PC-9 (cell line): ENCODE measurements at regions of chr11 and their contacts with region 1.

Region 1: GRCh38 chr11:64916775-64917662 is at the start of gene ATG2A:
- DNase-seq: peak; percentile 99
- H3K4me3 ChIP-seq: peak within 1 kb of the TSS; percentile 67
- H3K27ac ChIP-seq: peak within 1 kb of the TSS; percentile 50
- H3K4me1 ChIP-seq: peaks cover 16% of the 10 kb centered on the region
- H3K27me3 ChIP-seq: no peaks in the 10 kb centered on the region
- CTCF ChIP-seq: no peak
- total RNA-seq, gene ATG2A: 48.2 and 53.2 TPM in 2 replicates

Region 2: GRCh38 chr11:64878494-64879243 is 38.4 kb before region 1 on chr11 and contains the start of gene EHD1:
- CTCF ChIA-PET with region 1: no interaction called
- POLR2A ChIA-PET with region 1: no interaction called
- intact Hi-C with region 1: loop called (anchors 2 kb)
- DNase-seq: peak; percentile 92 to 99
- H3K4me3 ChIP-seq: peak within 1 kb of the TSS; percentile 98
- H3K27ac ChIP-seq: peak within 1 kb of the TSS; percentile 80
- H3K4me1 ChIP-seq: peaks cover 28% of the 10 kb centered on the region
- H3K27me3 ChIP-seq: no peaks in the 10 kb centered on the region
- CTCF ChIP-seq: peak; percentile 39
- total RNA-seq, gene EHD1: 110 and 134 TPM in 2 replicates

Region 3: GRCh38 chr11:64971421-64972233 is 54.6 kb after region 1 on chr11 and contains the start of gene MAJIN:
- CTCF ChIA-PET with region 1: no interaction called
- POLR2A ChIA-PET with region 1: no interaction called
- intact Hi-C with region 1: loop called (anchors 2 kb)
- DNase-seq: peak; percentile 66 to 93
- H3K4me3 ChIP-seq: peak within 1 kb of the TSS; percentile 52; the same call in 1 of the 2 replicates
- H3K27ac ChIP-seq: peak within 1 kb of the TSS; percentile 95
- H3K4me1 ChIP-seq: peaks cover 26% of the 10 kb centered on the region
- H3K27me3 ChIP-seq: 0 out of 2 replicates have a peak, but pooled peaks cover under 1% of the 10 kb centered on the region
- CTCF ChIP-seq: no peak
- total RNA-seq, gene MAJIN: 4.5 and 7.1 TPM in 2 replicates

Region 4: DNA sequence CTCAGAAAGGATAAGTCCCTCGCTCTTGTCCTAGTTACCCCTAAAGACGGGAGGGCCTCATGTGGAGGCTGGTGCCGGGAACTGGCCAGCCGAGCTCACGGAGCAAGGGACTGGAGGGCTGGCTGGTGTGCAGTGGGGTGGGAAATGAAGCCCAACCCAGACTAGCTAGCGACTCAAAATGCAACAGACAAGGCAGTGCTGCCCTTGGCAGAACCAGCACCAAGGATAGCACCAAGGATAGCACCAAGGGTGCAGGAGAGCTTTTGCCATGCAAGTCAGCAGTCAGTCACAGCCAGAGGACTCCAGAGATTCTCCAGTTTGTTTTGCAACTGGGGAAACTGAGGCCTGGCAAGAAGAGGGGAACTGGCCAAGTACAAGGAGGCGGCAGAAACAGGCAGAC is 86.3 kb after region 1 on chr11:
- CTCF ChIA-PET with region 1: interaction called, 3 read pairs
- POLR2A ChIA-PET with region 1: interaction called, 15 read pairs
- intact Hi-C with region 1: no loop called
- DNase-seq: no peak
- H3K4me3 ChIP-seq: no peak overlapping the region
- H3K27ac ChIP-seq: no peak overlapping the region
- H3K4me1 ChIP-seq: peaks cover 18% of the 10 kb centered on the region
- H3K27me3 ChIP-seq: no peaks in the 10 kb centered on the region
- CTCF ChIP-seq: no peak

Region 5: DNA sequence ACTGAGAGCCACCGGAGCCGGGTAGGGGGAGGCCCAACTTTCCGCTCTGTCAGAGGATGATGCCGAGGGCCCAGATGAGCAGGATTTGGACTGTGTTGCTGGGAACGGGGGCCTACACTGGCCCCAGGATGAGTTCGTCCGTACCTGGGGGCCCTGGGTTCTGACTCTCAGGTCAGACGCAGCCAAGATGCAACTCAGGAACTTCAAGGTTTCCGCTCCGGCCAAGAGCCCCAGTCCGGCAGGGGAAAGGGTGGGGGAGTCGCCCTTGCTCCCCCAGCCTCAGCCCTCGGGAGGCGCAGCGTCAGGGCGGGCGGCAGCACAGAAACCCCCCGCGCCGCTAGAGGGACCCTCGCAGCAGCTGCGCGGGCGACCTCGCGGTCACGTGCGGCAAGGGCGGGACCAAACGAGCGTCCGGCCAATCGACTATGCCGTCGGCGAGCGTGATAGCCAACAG is 96.7 kb after region 1 on chr11:
- CTCF ChIA-PET with region 1: interaction called, 4 read pairs
- POLR2A ChIA-PET with region 1: no interaction called
- intact Hi-C with region 1: loop called (anchors 1 kb)
- DNase-seq: peak in 1 of 2 experiments; percentile 80
- H3K4me3 ChIP-seq: peak overlapping the region; percentile 76
- H3K27ac ChIP-seq: peak overlapping the region; percentile 71
- H3K4me1 ChIP-seq: peaks cover 14% of the 10 kb centered on the region
- H3K27me3 ChIP-seq: no peaks in the 10 kb centered on the region
- CTCF ChIP-seq: peak; percentile 75

Region 6: DNA sequence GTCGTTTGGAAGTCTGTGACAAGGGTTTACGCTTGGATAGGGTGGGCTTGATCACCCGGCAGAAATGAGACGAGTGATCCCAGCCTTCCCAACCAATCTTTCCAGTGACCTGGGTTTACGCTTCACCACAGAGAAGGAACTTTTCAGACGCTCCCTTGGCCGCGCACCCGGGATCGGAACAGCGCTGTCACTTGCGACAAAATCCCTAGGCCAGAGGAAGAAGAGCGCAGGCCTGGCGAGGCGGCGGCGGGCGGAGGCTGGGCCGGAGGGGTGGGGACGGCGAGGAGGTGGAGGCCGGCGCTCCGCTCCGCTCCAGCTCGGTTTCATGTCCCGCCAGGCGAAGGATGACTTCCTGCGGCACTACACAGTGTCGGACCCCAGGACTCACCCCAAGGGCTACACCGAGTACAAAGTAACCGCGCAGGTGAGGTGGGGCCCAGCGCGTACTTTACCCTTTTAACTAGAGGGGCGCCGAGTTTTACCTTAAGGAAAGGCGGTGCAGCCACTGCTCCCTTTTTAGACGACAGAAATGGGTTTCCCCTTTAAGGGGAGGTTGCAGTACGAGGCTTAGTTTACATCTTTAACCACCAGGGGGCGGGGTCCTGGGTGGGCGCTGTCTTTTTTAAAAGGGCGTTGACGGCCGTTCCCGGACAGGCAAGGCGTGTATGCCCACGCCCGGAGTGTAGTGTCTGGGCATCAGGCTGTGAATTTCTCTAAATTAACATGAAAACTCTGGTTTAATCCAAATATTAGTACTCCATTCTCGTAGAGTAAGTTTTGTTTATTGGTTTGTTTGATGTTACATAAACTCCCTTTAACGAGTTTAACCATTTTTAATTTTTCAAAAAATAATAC is 110.4 kb after region 1 on chr11 and contains the start of gene SNX15:
- CTCF ChIA-PET with region 1: no interaction called
- POLR2A ChIA-PET with region 1: no interaction called
- intact Hi-C with region 1: loop called (anchors 1 kb)
- DNase-seq: peak; percentile 90 to 95
- H3K4me3 ChIP-seq: peak within 1 kb of the TSS; percentile 64
- H3K27ac ChIP-seq: peak within 1 kb of the TSS; percentile 36
- H3K4me1 ChIP-seq: peaks cover 9% of the 10 kb centered on the region
- H3K27me3 ChIP-seq: no peaks in the 10 kb centered on the region
- CTCF ChIP-seq: peak; percentile 94
- total RNA-seq, gene SNX15: 38.2 and 40.6 TPM in 2 replicates

Region 7: DNA sequence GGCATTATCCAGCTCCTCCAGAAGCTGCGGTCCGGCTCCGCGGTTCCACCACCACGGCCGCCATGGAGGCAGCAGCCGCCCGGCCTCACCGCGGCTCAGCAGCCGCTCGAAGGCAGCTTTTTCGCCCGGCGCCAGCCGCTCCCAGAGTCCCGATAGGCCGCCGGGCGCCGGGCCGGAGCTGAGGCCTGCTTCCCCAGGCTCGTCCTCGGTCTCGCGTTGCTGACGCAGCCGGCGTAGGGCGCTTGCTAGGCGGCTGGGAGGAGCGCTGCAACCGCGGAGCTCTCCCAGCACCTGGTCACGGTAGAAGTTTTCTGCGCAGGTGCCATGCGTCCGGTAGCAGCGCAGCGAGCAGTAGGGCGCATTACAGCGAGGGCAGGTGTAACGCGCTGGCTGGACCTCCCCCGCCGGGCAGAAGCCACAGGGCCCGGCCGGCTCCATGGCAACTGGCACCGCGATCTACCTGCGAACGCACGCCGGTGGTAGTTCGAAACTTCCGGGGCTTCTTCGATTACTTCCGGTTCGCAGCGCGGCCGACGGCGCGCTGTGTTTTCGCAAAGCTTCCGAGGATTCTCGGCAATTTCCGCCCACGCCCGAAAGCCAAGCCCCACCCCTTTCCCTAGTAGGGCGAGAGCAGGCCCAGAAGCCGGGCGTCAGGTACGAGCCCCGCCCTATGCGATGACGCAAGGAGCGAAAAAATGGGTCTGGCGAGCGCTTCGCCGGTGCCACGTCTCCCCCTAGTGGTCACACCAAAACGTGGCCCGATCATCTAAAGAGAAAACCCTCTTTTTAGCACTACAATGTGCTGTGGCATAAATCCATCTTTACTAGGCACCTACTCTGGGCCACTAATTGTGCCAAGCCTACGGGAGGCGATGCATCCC is 200.4 kb after region 1 on chr11 and contains the start of gene ZNHIT2:
- CTCF ChIA-PET with region 1: no interaction called
- POLR2A ChIA-PET with region 1: interaction called, 4 read pairs
- intact Hi-C with region 1: loop called (anchors 2 kb)
- DNase-seq: peak; percentile 96 to 100
- H3K4me3 ChIP-seq: peak within 1 kb of the TSS; percentile 100
- H3K27ac ChIP-seq: peak within 1 kb of the TSS; percentile 86
- H3K4me1 ChIP-seq: peaks cover 38% of the 10 kb centered on the region
- H3K27me3 ChIP-seq: no peaks in the 10 kb centered on the region
- CTCF ChIP-seq: peak; percentile 98
- total RNA-seq, gene ZNHIT2: 13.7 and 22.3 TPM in 2 replicates